CD14-positive monocyte (primary cell): ENCODE measurements at regions of chr1 and their contacts with region 1.

Region 1: DNA sequence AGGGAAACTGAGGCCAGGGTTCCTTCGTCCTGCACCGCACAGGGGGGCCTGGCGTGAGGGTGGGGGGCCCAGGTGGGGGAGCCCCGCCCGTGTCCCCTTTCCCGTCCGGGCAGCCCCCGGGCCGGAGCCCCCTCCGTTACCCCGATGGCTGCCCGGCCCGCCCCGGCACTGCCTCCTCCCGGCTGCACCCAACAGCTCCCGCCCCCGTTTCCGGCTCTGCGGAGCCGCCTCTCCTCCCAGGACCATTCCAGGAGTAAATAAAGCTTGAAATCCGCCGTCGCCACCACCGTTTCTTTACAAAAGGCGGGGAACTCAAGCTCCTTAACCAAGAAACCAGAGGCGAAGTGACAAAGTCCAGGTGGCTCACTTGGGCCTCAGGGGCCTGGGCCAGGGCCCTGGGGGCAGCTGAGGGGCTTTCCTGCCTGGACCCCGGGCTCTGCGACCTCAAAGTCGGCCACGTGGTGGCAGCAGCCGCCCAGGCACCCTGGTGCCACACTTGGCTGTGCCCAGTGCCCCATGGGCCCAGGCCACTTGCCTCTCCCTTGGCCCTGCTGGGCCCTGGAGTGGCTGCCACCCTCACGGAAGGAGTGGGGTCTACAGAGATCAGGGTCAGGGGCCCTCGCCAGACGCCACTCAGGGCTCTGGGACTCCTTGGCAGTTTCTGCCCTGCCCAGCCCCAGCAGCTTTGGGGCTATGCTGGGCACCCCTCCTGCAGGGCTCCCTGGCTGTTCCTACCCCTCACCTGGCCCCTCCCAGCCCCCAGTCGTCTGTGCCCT is 514 bp upstream of the FAAP20 start:
- DNase-seq: peak; percentile 77 to 85 (median 84)
- H3K4me3 ChIP-seq: peak overlapping the region; percentile 54 to 92 (median 61)
- H3K4me3 Mint-ChIP-seq: peak overlapping the region; percentile 78 to 84
- H3K27ac ChIP-seq: peak overlapping the region; percentile 69 to 89
- H3K27ac Mint-ChIP-seq: peak overlapping the region; percentile 76 to 95 (median 90)
- H3K4me1 ChIP-seq: peaks cover 39 to 47% of the 10 kb centered on the region in 2 donors
- H3K4me1 Mint-ChIP-seq: peaks cover 28% of the 10 kb centered on the region
- H3K27me3 ChIP-seq: no peaks in the 10 kb centered on the region
- H3K27me3 Mint-ChIP-seq: peaks cover 0 to 3% (median 1%) of the 10 kb centered on the region in 3 donors
- CTCF ChIP-seq: peak; percentile 99

Region 2: GRCh38 chr1:2133039-2133878 is 61.8 kb before region 1 on chr1:
- intact Hi-C with region 1: loop called (anchors 2 to 5 kb)
- DNase-seq: peak; percentile 97 to 99 (median 99)
- H3K4me3 ChIP-seq: peak overlapping the region; percentile 36 to 76 (median 40)
- H3K4me3 Mint-ChIP-seq: peak overlapping the region; percentile 81 to 88
- H3K27ac ChIP-seq: peak overlapping the region; percentile 63 to 87
- H3K27ac Mint-ChIP-seq: peak overlapping the region; percentile 93 to 97 (median 95)
- H3K4me1 ChIP-seq: peaks cover 15 to 23% of the 10 kb centered on the region in 2 donors
- H3K4me1 Mint-ChIP-seq: peaks cover 12% of the 10 kb centered on the region
- H3K27me3 ChIP-seq: peaks cover 0 to under 1% of the 10 kb centered on the region in 2 donors
- H3K27me3 Mint-ChIP-seq: peaks cover 7 to 16% (median 13%) of the 10 kb centered on the region in 3 donors
- CTCF ChIP-seq: no peak

Region 3: DNA sequence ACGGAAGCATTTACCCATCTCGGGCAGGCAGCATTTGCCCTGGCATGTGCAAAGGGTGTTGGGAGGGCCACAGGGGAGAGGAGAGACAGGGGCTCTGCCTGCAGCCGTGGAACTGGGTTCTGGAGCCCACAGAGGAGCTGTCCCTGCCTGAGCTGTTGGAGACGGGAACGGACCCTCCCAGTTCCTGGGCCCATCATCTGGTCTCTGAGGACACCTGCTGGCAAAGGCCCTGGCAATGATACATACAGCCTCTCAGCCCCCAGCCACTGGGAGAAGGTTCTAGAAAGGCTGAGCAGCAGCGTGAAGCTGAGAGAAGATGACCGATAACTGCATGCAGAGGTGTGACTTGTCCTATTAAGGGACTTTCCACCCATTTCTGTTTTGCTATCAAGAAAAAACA is 31.9 kb before region 1 on chr1:
- intact Hi-C with region 1: no loop called
- DNase-seq: peak in 2 of 3 donors; percentile 25 to 28
- H3K4me3 ChIP-seq: no peak overlapping the region
- H3K4me3 Mint-ChIP-seq: no peak overlapping the region
- H3K27ac ChIP-seq: no peak overlapping the region
- H3K27ac Mint-ChIP-seq: no peak overlapping the region
- H3K4me1 ChIP-seq: peaks cover 17 to 22% of the 10 kb centered on the region in 2 donors
- H3K4me1 Mint-ChIP-seq: peaks cover 24% of the 10 kb centered on the region
- H3K27me3 ChIP-seq: no peaks in the 10 kb centered on the region
- H3K27me3 Mint-ChIP-seq: peaks cover 1 to 5% (median 4%) of the 10 kb centered on the region in 3 donors
- CTCF ChIP-seq: peak; percentile 21

Region 4: GRCh38 chr1:2314803-2315673 is 120.0 kb after region 1 on chr1:
- intact Hi-C with region 1: loop called (anchors 5 to 10 kb)
- DNase-seq: peak in 1 of 3 donors; percentile 33
- H3K4me3 ChIP-seq: peak overlapping the region in 1 of 3 experiments; percentile 37
- H3K4me3 Mint-ChIP-seq: peak overlapping the region in 1 of 2 donors; percentile 35
- H3K27ac ChIP-seq: no peak overlapping the region
- H3K27ac Mint-ChIP-seq: peak overlapping the region in 1 of 7 donors; percentile 11
- H3K4me1 ChIP-seq: peaks cover 15 to 23% of the 10 kb centered on the region in 2 donors
- H3K4me1 Mint-ChIP-seq: peaks cover 4% of the 10 kb centered on the region
- H3K27me3 ChIP-seq: peaks cover 5 to 43% of the 10 kb centered on the region in 2 donors
- H3K27me3 Mint-ChIP-seq: peaks cover 12 to 56% (median 25%) of the 10 kb centered on the region in 3 donors
- CTCF ChIP-seq: peak; percentile 99

Region 5: DNA sequence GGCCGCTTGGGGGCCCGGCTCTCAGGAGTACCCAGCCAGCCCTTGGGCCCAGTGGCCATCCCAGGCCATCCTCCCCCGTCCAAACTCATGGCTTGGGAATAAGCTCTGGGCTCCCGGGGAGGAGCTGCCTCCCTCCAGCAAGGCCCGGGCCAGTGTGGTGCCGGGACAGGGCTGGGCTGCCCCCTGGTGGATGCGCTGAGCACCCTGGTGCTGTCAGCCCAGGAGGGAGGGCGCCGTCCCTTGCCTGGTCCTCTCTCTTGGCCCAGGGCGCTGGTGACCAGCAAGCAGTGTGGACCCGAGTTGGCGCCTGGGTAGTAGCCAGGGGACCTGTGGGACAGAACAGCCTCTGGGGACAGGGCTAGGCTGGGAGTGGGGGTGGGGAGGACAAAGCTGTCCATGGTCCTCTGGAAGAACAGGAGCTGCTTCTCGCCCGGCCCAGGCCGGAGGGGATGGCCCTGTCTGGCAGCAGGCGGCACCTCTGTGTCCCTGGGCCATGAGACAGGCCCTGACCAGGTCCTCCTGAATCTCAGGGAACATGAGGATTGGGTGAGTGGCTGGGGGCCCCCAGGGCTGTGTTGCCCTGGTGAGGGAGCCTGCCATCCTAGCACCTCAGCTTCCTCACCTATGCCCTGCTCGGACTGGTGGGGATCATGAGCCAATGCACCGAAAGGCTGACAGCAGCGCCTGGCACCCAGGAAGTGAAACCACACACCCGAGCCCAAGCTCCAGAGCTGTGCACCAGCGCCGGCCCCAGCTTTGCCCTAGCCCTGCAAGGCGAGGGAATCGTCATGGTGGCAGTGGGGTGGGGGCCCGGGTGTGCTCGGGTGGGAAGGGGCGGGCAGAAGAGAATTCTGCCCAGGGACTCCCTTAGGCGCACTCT is 186.9 kb after region 1 on chr1:
- intact Hi-C with region 1: loop called (anchors 1 kb)
- DNase-seq: peak; percentile 64 to 71 (median 67)
- H3K4me3 ChIP-seq: no peak overlapping the region
- H3K4me3 Mint-ChIP-seq: no peak overlapping the region
- H3K27ac ChIP-seq: no peak overlapping the region
- H3K27ac Mint-ChIP-seq: no peak overlapping the region
- H3K4me1 ChIP-seq: peaks cover 4 to 6% of the 10 kb centered on the region in 2 donors
- H3K4me1 Mint-ChIP-seq: peaks cover 9% of the 10 kb centered on the region
- H3K27me3 ChIP-seq: no peaks in the 10 kb centered on the region
- H3K27me3 Mint-ChIP-seq: peaks cover 0 to 3% (median 0%) of the 10 kb centered on the region in 3 donors
- CTCF ChIP-seq: peak; percentile 85